ENCODE measurements at regions of chr18 and their contacts with region 1.

Region 1: GRCh38 chr18:74702950-74703349 is 105.3 kb downstream of the ZNF407 start:
- DNase-seq: no peak
- H3K4me3 ChIP-seq: no peak overlapping the region
- H3K27ac ChIP-seq: no peak overlapping the region
- H3K4me1 ChIP-seq: peaks cover 0 to 5% (median 0%) of the 10 kb centered on the region in 4 donors
- H3K27me3 ChIP-seq: no peaks in the 10 kb centered on the region
- CTCF ChIP-seq: no peak
- EP300 ChIP-seq: no peak
- POLR2A ChIP-seq: no peak

Region 2: DNA sequence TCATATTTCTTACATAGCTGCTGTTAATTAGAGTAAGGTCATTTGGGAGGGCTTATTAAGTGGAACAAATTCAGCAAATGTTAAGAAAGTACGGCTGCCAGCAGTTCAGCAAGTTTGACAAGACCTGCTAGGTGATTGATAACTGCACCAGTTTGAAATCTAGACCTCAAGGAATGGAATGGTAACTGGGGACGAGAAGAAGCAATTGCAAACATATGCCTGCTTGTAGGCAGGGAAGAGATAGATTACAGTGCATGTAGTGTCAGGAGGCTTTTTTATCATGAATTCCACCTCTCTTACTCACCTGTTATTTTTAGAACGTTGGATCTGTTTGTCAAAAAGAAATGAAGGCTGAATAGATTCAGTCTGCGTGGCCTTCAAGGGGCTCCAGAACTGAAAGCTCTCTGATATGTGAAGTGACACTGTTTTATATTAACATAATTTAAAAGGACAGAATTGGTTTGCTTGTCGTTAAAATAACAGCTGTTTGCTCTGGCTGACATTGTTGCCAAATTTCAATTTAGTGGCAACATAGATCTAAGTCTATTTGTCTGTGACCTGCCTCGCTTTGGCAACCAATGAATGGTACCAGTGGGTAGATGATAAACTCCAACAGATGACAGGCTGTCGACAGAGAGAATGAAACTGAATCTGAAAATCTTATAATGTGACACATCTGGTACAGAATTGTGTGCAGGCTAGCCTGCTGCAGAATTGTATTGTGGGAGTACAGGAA is 94.1 kb after region 1 on chr18:
- in situ Hi-C with region 1: no loop called
- intact Hi-C with region 1: no loop called
- DNase-seq: no peak
- H3K4me3 ChIP-seq: no peak overlapping the region
- H3K27ac ChIP-seq: peak overlapping the region in 3 of 4 donors; percentile 19 to 50 (median 42)
- H3K4me1 ChIP-seq: peaks cover 0 to 7% (median 0%) of the 10 kb centered on the region in 4 donors
- H3K27me3 ChIP-seq: no peaks in the 10 kb centered on the region
- CTCF ChIP-seq: no peak
- EP300 ChIP-seq: no peak
- POLR2A ChIP-seq: no peak

Region 3: DNA sequence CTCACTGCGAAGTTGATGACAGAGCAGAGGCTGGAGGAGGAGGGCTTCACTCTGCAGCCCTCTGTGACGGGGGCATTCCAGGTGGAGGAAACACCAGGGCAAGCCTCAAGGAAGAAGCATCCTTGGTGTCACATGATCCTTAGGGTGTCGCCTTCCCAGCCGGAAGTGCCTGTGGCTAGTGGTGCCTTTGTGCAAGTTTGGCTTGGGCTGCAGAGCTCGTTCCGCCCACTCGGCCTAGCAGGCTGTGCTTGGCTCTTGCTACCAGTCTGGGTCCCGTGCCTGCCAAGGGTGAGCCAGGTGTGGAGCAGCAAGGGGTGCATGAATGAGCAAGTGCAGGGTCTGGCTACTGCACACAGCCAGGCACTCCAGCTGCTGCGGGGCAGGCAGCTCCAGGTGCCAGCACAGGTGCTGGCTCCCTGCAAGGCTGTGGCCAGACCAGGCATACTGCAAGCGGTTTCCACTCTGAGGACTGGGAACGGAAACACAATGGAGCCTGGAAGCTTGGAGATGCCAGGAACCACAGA is 1049.9 kb after region 1 on chr18:
- in situ Hi-C with region 1: no loop called
- intact Hi-C with region 1: loop called (anchors 5 kb)
- DNase-seq: no peak
- H3K4me3 ChIP-seq: no peak overlapping the region
- H3K27ac ChIP-seq: no peak overlapping the region
- H3K4me1 ChIP-seq: no peaks in the 10 kb centered on the region
- H3K27me3 ChIP-seq: no peaks in the 10 kb centered on the region
- CTCF ChIP-seq: no peak
- EP300 ChIP-seq: no peak
- POLR2A ChIP-seq: no peak